Activated CD4-positive, alpha-beta memory T cell treated with anti-CD3 and anti-CD28 coated beads for 36 hours (primary cell): ENCODE measurements at regions of chr13 and their contacts with region 1.

Region 1: DNA sequence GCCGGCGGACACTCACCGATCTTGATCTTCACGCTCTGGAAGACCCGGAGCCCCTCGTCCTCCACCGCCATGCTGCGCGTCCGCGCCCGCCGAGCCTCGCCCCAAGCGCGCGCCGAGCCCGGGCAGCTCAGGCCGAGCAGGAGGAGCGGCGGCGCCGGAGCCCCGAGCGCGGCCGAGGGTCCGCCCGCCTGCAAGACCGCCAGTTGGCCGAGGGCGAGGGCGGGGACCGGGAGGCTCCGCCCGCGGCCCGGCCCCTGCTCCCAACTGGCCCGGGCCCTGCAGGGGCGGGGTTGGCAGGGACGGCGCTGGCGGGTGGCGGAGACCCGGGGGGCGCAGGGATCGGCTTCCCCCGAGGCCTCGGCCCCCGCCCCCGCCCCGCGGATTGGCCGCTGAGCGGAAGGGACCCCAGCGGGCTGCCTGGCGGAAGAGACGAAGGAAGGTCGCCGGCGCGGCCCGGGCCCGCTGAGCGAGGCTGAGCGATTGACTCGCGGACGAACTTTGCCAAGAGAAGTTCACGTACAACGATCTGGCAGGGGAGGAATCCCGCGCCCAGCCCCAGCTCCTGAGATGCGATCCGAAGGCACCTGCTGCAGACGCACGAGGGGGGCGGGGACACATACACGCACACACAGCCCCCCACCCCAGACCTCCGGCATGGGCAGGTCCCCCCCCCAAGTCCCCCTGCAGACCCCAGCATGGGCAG is at the start of gene RASA3:
- DNase-seq: peak; percentile 73
- H3K4me3 Mint-ChIP-seq: peak within 1 kb of the TSS; percentile 97
- H3K27ac Mint-ChIP-seq: peak within 1 kb of the TSS; percentile 93
- H3K4me1 Mint-ChIP-seq: peaks cover 39% of the 10 kb centered on the region
- H3K27me3 Mint-ChIP-seq: no peaks in the 10 kb centered on the region
- total RNA-seq, gene RASA3: 45.9 to 49.3 TPM

Region 2: DNA sequence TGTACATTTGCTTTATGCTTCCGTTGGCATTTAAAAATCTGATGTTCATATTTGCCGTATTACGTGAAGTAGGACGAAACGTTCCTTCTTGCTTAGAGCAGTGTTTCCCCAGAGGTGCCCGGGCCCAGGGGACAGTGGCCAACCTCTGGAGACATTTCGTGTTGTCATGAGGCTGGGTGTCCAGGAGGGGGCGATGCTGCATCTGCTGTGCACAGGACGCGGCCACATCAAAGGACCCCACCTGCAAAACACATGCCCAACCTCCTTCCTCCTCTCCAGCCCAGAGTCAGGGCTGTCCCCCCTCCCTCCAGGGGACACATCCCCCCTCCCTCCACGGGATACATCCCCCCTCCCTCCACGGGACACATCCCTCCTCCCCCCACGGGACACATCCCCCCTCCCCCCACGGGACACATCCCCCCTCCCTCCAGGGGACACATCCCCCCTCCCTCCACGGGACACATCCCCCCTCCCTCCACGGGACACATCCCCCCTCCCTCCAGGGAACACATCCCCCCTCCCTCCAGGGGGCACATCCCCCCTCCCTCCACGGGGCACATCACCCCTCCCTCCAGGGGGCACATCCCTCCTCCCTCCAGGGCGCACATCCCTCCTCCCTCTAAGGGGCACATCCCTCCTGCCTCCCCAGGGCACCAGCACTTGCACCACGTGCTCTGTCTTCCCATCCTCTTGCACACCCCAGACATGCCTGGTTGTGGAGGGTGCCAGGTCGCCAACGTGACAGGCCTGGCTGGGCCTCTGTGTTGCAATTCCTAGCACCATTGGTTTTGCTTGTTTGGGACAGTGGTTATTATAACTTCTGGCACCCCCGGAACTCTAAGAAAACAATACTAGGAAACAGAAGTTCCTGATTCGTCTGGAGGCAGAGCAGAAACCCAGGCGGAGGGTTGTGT is 315.4 kb before region 1 on chr13:
- CTCF ChIA-PET with region 1: no interaction called
- POLR2A ChIA-PET with region 1: no interaction called
- intact Hi-C with region 1: loop called (anchors 10 kb)
- DNase-seq: peak; percentile 91
- H3K4me3 Mint-ChIP-seq: peak overlapping the region; percentile 92
- H3K27ac Mint-ChIP-seq: peak overlapping the region; percentile 51
- H3K4me1 Mint-ChIP-seq: peaks cover 19% of the 10 kb centered on the region
- H3K27me3 Mint-ChIP-seq: peaks cover 2% of the 10 kb centered on the region

Region 3: GRCh38 chr13:114110091-114110829 is 22.3 kb before region 1 on chr13:
- CTCF ChIA-PET with region 1: no interaction called
- POLR2A ChIA-PET with region 1: interaction called, 7 read pairs
- intact Hi-C with region 1: loop called (anchors 2 kb)
- DNase-seq: peak; percentile 87
- H3K4me3 Mint-ChIP-seq: peak overlapping the region; percentile 77
- H3K27ac Mint-ChIP-seq: peak overlapping the region; percentile 88
- H3K4me1 Mint-ChIP-seq: peaks cover 78% of the 10 kb centered on the region
- H3K27me3 Mint-ChIP-seq: no peaks in the 10 kb centered on the region

Region 4: GRCh38 chr13:114143806-114144605 is 11.4 kb after region 1 on chr13:
- CTCF ChIA-PET with region 1: interaction called, 8 read pairs
- POLR2A ChIA-PET with region 1: interaction called, 18 read pairs
- intact Hi-C with region 1: loop called (anchors 1 kb)
- DNase-seq: peak; percentile 66
- H3K4me3 Mint-ChIP-seq: no peak overlapping the region
- H3K27ac Mint-ChIP-seq: no peak overlapping the region
- H3K4me1 Mint-ChIP-seq: peaks cover 13% of the 10 kb centered on the region
- H3K27me3 Mint-ChIP-seq: no peaks in the 10 kb centered on the region

Region 5: GRCh38 chr13:114212158-114212495 is 79.6 kb after region 1 on chr13:
- CTCF ChIA-PET with region 1: no interaction called
- POLR2A ChIA-PET with region 1: no interaction called
- intact Hi-C with region 1: no loop called
- DNase-seq: no peak
- H3K4me3 Mint-ChIP-seq: no peak overlapping the region
- H3K27ac Mint-ChIP-seq: no peak overlapping the region
- H3K4me1 Mint-ChIP-seq: peaks cover 11% of the 10 kb centered on the region
- H3K27me3 Mint-ChIP-seq: no peaks in the 10 kb centered on the region

Region 6: GRCh38 chr13:114234645-114235421 is 102.3 kb after region 1 on chr13 and contains the start of gene CDC16:
- CTCF ChIA-PET with region 1: no interaction called
- POLR2A ChIA-PET with region 1: no interaction called
- intact Hi-C with region 1: loop called (anchors 1 kb)
- DNase-seq: peak; percentile 92
- H3K4me3 Mint-ChIP-seq: peak within 1 kb of the TSS; percentile 91
- H3K27ac Mint-ChIP-seq: peak within 1 kb of the TSS; percentile 73
- H3K4me1 Mint-ChIP-seq: peaks cover 31% of the 10 kb centered on the region
- H3K27me3 Mint-ChIP-seq: peaks cover 3% of the 10 kb centered on the region
- total RNA-seq, gene CDC16: 63.1 to 69.8 TPM